Activated CD8-positive, alpha-beta T cell treated with anti-CD3 and anti-CD28 coated beads for 36 hours (primary cell): ENCODE measurements at regions of chr14 and their contacts with region 1.

Region 1: GRCh38 chr14:22039938-22040775 is 366.5 kb upstream of the OR4E1 start:
- DNase-seq: peak; percentile 75
- ATAC-seq: peak; percentile 91
- H3K4me3 Mint-ChIP-seq: peak overlapping the region; percentile 77
- H3K27ac Mint-ChIP-seq: peak overlapping the region; percentile 82
- H3K4me1 Mint-ChIP-seq: peaks cover 9% of the 10 kb centered on the region
- H3K27me3 Mint-ChIP-seq: no peaks in the 10 kb centered on the region
- CTCF ChIP-seq: peak; percentile 48

Region 2: GRCh38 chr14:21825149-21825743 is 214.9 kb before region 1 on chr14:
- CTCF ChIA-PET with region 1: no interaction called
- POLR2A ChIA-PET with region 1: no interaction called
- intact Hi-C with region 1: no loop called
- DNase-seq: peak; percentile 64
- ATAC-seq: peak; percentile 99
- H3K4me3 Mint-ChIP-seq: peak overlapping the region; percentile 61
- H3K27ac Mint-ChIP-seq: no peak overlapping the region
- H3K4me1 Mint-ChIP-seq: peaks cover 4% of the 10 kb centered on the region
- H3K27me3 Mint-ChIP-seq: peaks cover 26% of the 10 kb centered on the region
- CTCF ChIP-seq: peak; percentile 73

Region 3: GRCh38 chr14:21978184-21978998 is 61.8 kb before region 1 on chr14:
- CTCF ChIA-PET with region 1: interaction called, 19 read pairs
- POLR2A ChIA-PET with region 1: no interaction called
- intact Hi-C with region 1: no loop called
- DNase-seq: peak; percentile 78
- ATAC-seq: peak; percentile 78
- H3K4me3 Mint-ChIP-seq: peak overlapping the region; percentile 78
- H3K27ac Mint-ChIP-seq: peak overlapping the region; percentile 63
- H3K4me1 Mint-ChIP-seq: peaks cover 21% of the 10 kb centered on the region
- H3K27me3 Mint-ChIP-seq: no peaks in the 10 kb centered on the region
- CTCF ChIP-seq: peak; percentile 67

Region 4: DNA sequence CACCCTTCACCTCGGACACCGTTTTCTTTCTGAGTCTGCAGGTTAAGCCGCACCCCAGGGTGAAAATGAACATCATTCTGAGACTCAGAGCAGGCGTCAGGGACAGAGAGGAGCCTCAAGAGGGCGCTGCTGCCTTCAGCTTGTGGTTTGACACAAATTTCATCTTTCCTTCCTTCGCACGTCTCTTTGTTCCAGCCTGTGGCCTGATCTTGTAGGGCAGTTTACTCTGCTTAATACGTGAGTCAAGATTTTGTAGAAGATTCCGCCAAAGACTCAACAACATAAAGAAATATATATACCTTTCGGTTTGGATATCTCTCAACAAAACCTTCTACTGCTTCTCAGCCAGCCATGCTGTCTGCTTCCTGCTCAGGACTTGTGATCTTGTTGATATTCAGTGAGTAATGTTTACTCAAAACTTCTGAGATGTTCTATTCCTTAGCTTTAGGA is 37.3 kb before region 1 on chr14:
- CTCF ChIA-PET with region 1: interaction called, 15 read pairs
- POLR2A ChIA-PET with region 1: no interaction called
- intact Hi-C with region 1: loop called (anchors 5 kb)
- DNase-seq: peak; percentile 86
- ATAC-seq: peak; percentile 79
- H3K4me3 Mint-ChIP-seq: peak overlapping the region; percentile 81
- H3K27ac Mint-ChIP-seq: peak overlapping the region; percentile 92
- H3K4me1 Mint-ChIP-seq: peaks cover 17% of the 10 kb centered on the region
- H3K27me3 Mint-ChIP-seq: no peaks in the 10 kb centered on the region
- CTCF ChIP-seq: peak; percentile 58

Region 5: GRCh38 chr14:22052795-22053194 is 12.6 kb after region 1 on chr14:
- CTCF ChIA-PET with region 1: interaction called, 11 read pairs
- POLR2A ChIA-PET with region 1: no interaction called
- intact Hi-C with region 1: no loop called
- DNase-seq: peak; percentile 45
- ATAC-seq: peak; percentile 85
- H3K4me3 Mint-ChIP-seq: peak overlapping the region; percentile 74
- H3K27ac Mint-ChIP-seq: peak overlapping the region; percentile 88
- H3K4me1 Mint-ChIP-seq: peaks cover 38% of the 10 kb centered on the region
- H3K27me3 Mint-ChIP-seq: no peaks in the 10 kb centered on the region
- CTCF ChIP-seq: no peak

Region 6: GRCh38 chr14:22099942-22100763 is 60.0 kb after region 1 on chr14:
- CTCF ChIA-PET with region 1: interaction called, 10 read pairs
- POLR2A ChIA-PET with region 1: no interaction called
- intact Hi-C with region 1: loop called (anchors 5 kb)
- DNase-seq: peak; percentile 79
- ATAC-seq: peak; percentile 67
- H3K4me3 Mint-ChIP-seq: no peak overlapping the region
- H3K27ac Mint-ChIP-seq: peak overlapping the region; percentile 38
- H3K4me1 Mint-ChIP-seq: peaks cover 48% of the 10 kb centered on the region
- H3K27me3 Mint-ChIP-seq: no peaks in the 10 kb centered on the region
- CTCF ChIP-seq: peak; percentile 39

Region 7: GRCh38 chr14:22391912-22392421 is 351.8 kb after region 1 on chr14:
- CTCF ChIA-PET with region 1: no interaction called
- POLR2A ChIA-PET with region 1: no interaction called
- intact Hi-C with region 1: no loop called
- DNase-seq: no peak
- ATAC-seq: no peak
- H3K4me3 Mint-ChIP-seq: no peak overlapping the region
- H3K27ac Mint-ChIP-seq: no peak overlapping the region
- H3K4me1 Mint-ChIP-seq: no peaks in the 10 kb centered on the region
- H3K27me3 Mint-ChIP-seq: no peaks in the 10 kb centered on the region
- CTCF ChIP-seq: no peak